HCT116 (cell line): ENCODE measurements at regions of chr20 and their contacts with region 1.

Region 1: DNA sequence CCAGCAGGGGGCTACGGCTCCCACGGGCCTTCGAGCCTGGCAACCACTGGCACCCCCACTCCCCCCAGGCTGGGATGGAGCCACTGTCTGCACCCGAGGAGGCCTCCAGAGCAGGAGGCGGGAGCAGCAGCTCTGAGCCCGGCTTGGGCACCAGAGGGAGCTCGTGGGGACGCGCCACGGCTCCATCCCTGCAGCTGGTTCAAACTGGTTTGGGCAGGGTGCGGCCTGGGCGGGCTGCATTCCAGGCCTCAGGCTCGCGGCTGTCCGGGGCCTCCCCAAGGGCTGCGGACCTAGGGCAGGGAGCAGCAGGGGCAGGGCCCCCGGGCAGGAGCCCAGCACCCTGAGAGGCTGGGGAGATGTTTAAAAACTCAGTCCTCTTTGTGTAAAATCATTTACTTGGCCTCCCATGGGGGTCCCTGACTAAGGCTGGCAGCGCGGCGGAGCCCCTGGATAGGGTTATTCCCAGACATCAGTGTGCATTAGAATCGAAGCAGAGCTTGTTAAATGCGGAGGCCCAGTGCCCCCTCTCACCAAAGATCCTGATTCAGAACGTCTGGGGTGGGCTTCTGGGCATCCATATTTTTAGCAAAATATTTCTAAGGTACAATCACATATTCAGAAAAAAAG is 4.1 kb upstream of the BCAS4 start:
- DNase-seq: peak; percentile 82
- ATAC-seq: peak; percentile 83
- H3K4me3 ChIP-seq: peak overlapping the region in 1 of 2 experiments; percentile 28; a peak in 2 of 4 replicates
- H3K27ac ChIP-seq: peak overlapping the region; percentile 83
- H3K4me1 ChIP-seq: peaks cover 22 to 54% of the 10 kb centered on the region in 2 experiments
- H3K27me3 ChIP-seq: no peaks in the 10 kb centered on the region
- CTCF ChIP-seq: peak; percentile 64 to 86 (median 74); a peak in 5 of 6 replicates
- POLR2A ChIP-seq: peak; percentile 54
- RAD21 ChIP-seq: peak; percentile 46

Region 2: GRCh38 chr20:50498081-50498776 is 292.5 kb before region 1 on chr20:
- CTCF ChIA-PET with region 1: no interaction called
- POLR2A ChIA-PET with region 1: no interaction called
- RAD21 ChIA-PET with region 1: no interaction called
- intact Hi-C with region 1: no loop called
- DNase-seq: no peak
- ATAC-seq: no peak
- H3K4me3 ChIP-seq: no peak overlapping the region
- H3K27ac ChIP-seq: no peak overlapping the region
- H3K4me1 ChIP-seq: peaks cover 8 to 55% of the 10 kb centered on the region in 2 experiments
- H3K27me3 ChIP-seq: no peaks in the 10 kb centered on the region
- CTCF ChIP-seq: no peak
- POLR2A ChIP-seq: no peak
- RAD21 ChIP-seq: no peak

Region 3: DNA sequence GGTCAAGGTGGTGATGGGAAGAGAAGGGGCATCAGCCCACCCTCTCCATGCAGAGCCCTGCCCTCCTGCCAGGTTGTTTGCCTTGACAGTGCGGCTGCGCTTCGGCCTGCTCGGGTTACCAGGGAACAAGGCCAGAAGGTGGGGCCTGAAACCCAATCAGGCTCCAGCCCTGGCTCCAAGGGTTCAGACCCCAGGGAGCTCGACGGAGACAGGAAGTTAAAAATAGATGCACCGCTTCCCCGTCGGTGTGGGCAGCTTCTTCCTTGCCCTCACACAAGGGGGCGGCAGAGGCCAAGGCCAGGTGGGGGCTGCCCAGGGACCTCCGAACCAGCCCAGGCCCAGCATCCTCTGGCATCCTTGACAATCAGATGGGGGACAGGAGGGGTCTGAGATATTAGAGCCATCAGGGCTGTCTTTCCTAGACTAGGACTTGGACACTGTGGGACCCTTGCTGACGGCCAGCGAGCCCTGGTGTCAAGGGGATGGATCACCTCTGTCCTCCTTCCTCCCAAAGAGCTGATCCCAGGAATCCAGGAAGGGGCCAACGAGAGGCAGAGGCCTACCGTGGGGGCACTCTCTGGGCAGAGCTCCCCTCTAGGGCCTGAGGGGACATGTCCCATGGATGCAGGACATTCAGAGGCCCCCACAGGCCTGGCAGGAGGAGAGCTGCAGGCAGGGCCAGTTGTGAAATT is 164.6 kb before region 1 on chr20:
- CTCF ChIA-PET with region 1: interaction called, 106 read pairs
- POLR2A ChIA-PET with region 1: interaction called, 12 read pairs
- RAD21 ChIA-PET with region 1: interaction called, 10 to 11 read pairs
- intact Hi-C with region 1: loop called (anchors 1 kb)
- DNase-seq: peak; percentile 36
- ATAC-seq: peak; percentile 91
- H3K4me3 ChIP-seq: 0 out of 4 replicates have a peak overlapping the region, but pooled peaks of 1 of the 2 experiments have one; percentile 7
- H3K27ac ChIP-seq: no peak overlapping the region
- H3K4me1 ChIP-seq: peaks cover 6 to 20% of the 10 kb centered on the region in 2 experiments; a peak in 3 of 4 replicates
- H3K27me3 ChIP-seq: no peaks in the 10 kb centered on the region
- CTCF ChIP-seq: peak; percentile 83 to 90 (median 85)
- POLR2A ChIP-seq: no peak
- RAD21 ChIP-seq: peak; percentile 98

Region 4: GRCh38 chr20:50663095-50663850 is 127.5 kb before region 1 on chr20:
- CTCF ChIA-PET with region 1: interaction called, 36 read pairs
- POLR2A ChIA-PET with region 1: interaction called, 5 read pairs
- RAD21 ChIA-PET with region 1: interaction called, 5 to 11 read pairs
- intact Hi-C with region 1: loop called (anchors 1 kb)
- DNase-seq: peak; percentile 36
- ATAC-seq: peak; percentile 75
- H3K4me3 ChIP-seq: no peak overlapping the region
- H3K27ac ChIP-seq: no peak overlapping the region
- H3K4me1 ChIP-seq: peaks cover 26 to 43% of the 10 kb centered on the region in 2 experiments; a peak in 3 of 4 replicates
- H3K27me3 ChIP-seq: no peaks in the 10 kb centered on the region
- CTCF ChIP-seq: peak; percentile 34 to 62 (median 50); a peak in 4 of 6 replicates
- POLR2A ChIP-seq: no peak
- RAD21 ChIP-seq: peak; percentile 80

Region 5: GRCh38 chr20:50804418-50805064 is 13.8 kb after region 1 on chr20:
- CTCF ChIA-PET with region 1: interaction called, 10 read pairs
- POLR2A ChIA-PET with region 1: no interaction called
- RAD21 ChIA-PET with region 1: no interaction called
- intact Hi-C with region 1: no loop called
- DNase-seq: no peak
- ATAC-seq: no peak
- H3K4me3 ChIP-seq: no peak overlapping the region
- H3K27ac ChIP-seq: no peak overlapping the region
- H3K4me1 ChIP-seq: no peaks in the 10 kb centered on the region
- H3K27me3 ChIP-seq: no peaks in the 10 kb centered on the region
- CTCF ChIP-seq: no peak
- POLR2A ChIP-seq: no peak
- RAD21 ChIP-seq: no peak

Region 6: GRCh38 chr20:50929299-50930138 is 138.8 kb after region 1 on chr20:
- CTCF ChIA-PET with region 1: interaction called, 39 read pairs
- POLR2A ChIA-PET with region 1: interaction called, 9 read pairs
- RAD21 ChIA-PET with region 1: interaction called in 1 of 2 experiments, 4 read pairs
- intact Hi-C with region 1: loop called (anchors 1 kb)
- DNase-seq: peak; percentile 96
- ATAC-seq: peak; percentile 74
- H3K4me3 ChIP-seq: peak overlapping the region; percentile 63 to 75
- H3K27ac ChIP-seq: peak overlapping the region; percentile 85
- H3K4me1 ChIP-seq: peaks cover 4 to 27% of the 10 kb centered on the region in 2 experiments; a peak in 3 of 4 replicates
- H3K27me3 ChIP-seq: no peaks in the 10 kb centered on the region
- CTCF ChIP-seq: peak; percentile 97 to 99 (median 99)
- POLR2A ChIP-seq: no peak
- RAD21 ChIP-seq: peak; percentile 76

Region 7: GRCh38 chr20:50967586-50967985 is 176.8 kb after region 1 on chr20:
- CTCF ChIA-PET with region 1: no interaction called
- POLR2A ChIA-PET with region 1: no interaction called
- RAD21 ChIA-PET with region 1: no interaction called
- intact Hi-C with region 1: no loop called
- DNase-seq: no peak
- ATAC-seq: no peak
- H3K4me3 ChIP-seq: no peak overlapping the region
- H3K27ac ChIP-seq: no peak overlapping the region
- H3K4me1 ChIP-seq: no peaks in the 10 kb centered on the region
- H3K27me3 ChIP-seq: no peaks in the 10 kb centered on the region
- CTCF ChIP-seq: no peak
- POLR2A ChIP-seq: no peak
- RAD21 ChIP-seq: no peak

Region 8: DNA sequence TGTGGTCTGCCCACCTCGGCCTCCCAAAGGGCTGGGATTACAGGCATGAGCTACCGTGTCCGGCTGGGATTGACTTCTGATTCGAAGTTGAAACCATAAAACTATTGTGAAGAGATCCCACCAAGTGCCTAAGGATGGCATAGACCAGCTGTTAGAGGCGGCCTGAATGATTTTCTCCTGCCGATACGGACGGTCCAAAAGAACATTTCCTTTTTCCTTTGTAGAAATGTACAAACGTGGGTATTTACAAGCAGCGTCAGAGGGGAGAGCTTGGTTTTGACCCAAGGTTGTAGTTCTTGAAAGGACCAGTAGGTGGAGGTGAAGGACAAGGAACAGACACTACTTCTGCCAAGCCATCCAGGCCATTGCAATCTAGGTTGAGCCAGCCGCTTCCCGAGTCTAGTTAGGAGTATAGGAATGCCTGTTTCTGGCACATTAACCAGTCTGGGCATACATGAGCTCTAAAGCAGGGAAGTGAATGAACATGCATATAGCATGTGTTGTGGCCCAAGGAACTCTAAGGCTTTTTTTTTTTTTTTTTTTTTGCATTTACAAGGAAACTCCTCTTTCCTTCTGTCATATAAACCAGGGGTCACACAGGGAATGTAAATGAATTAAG is 196.9 kb after region 1 on chr20:
- CTCF ChIA-PET with region 1: interaction called, 18 read pairs
- POLR2A ChIA-PET with region 1: interaction called, 3 read pairs
- RAD21 ChIA-PET with region 1: interaction called, 3 to 7 read pairs
- intact Hi-C with region 1: no loop called
- DNase-seq: peak; percentile 92
- ATAC-seq: peak; percentile 97
- H3K4me3 ChIP-seq: peak overlapping the region; percentile 34 to 36
- H3K27ac ChIP-seq: no peak overlapping the region
- H3K4me1 ChIP-seq: peaks cover 0 to 10% of the 10 kb centered on the region in 2 experiments; a peak in 1 of 4 replicates
- H3K27me3 ChIP-seq: no peaks in the 10 kb centered on the region
- CTCF ChIP-seq: peak; percentile 80 to 89 (median 86)
- POLR2A ChIP-seq: no peak
- RAD21 ChIP-seq: peak; percentile 96